Mammary epithelial cell (primary cell): ENCODE measurements at regions of chr1 and their contacts with region 1.

Region 1: DNA sequence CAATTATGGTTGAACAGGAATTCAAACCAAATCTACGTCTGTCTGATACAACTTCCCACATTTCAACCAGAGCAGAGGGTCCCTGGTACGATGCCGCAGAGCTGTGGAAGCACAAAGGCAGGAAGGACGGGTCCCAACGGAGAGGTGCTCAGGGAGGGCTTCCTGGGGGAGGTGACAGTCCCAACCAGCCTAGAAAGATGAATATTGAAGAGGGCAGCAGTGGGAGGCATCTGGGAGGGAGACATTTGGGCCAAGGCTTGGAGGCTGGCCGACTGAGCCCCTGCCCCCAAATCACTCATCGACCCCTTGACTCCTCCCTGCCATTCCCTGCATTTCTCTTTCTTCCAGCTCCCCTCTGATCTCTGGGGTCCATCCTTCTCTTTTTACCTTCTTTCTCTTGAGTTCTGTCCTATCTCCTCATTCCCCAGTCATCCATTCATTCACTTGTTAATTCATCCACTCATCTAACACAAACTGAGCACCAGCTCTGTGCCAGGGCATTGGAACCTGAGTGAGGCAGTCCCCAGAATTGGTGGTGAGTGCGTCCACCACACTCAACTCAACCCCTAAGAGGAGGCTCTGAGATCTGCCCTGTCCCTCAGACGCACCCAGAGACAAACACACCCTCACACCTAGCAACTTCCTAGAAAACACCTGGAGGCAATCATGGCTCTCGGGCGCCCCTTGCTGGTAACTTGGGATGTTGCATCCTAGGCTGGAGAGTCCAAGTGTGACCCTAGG is 13.2 kb upstream of the CELA3B start:
- DNase-seq: peak; percentile 71
- H3K4me3 ChIP-seq: no peak overlapping the region
- H3K27ac ChIP-seq: no peak overlapping the region
- H3K4me1 ChIP-seq: peaks cover 3% of the 10 kb centered on the region
- H3K27me3 ChIP-seq: no peaks in the 10 kb centered on the region
- CTCF ChIP-seq: peak; percentile 94

Region 2: DNA sequence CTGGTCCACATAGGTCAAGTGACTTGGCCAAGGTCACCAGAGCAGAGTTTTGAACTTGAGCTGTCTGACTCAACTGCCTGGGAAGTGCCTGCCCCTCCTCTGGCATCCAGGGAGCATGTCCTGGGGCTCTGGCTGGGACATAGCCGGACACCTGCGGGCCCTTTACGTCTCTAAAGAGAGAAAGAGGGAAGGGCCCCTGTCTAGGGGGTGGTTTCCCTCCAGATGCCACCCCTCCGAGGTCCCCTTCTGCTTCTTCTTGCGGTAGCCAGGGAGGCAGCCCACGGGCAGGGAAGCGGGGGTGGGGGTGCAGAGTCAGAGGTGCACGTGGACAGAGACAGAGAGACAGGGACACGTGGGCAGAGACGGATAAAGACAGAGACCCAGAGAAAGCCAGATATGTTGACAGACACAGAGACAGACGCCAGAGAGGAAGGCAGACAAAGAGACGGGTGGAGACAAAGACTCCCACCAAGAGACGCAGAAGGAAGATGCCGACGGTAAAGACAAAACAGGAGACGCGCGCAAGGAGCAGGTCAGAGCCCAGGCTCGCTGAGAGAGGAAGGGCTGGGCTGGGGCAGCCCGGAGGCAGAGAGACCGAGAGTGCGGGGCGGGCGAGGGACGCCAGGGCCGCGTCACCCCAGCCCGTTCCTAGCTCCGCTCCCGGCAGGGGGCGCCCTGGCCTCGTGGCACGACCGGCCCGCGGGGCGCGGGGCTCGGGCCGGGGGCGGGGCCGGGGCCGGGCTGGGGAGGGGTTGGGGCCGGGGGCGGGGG is 454.9 kb before region 1 on chr1:
- CTCF ChIA-PET with region 1: no interaction called
- dilution Hi-C with region 1: no loop called
- in situ Hi-C with region 1: no loop called
- intact Hi-C with region 1: loop called (anchors 10 kb)
- DNase-seq: peak; percentile 21
- H3K4me3 ChIP-seq: peak overlapping the region in 2 of 3 experiments; percentile 18 to 21
- H3K27ac ChIP-seq: no peak overlapping the region
- H3K4me1 ChIP-seq: peaks cover 14% of the 10 kb centered on the region
- H3K27me3 ChIP-seq: peaks cover 13% of the 10 kb centered on the region
- CTCF ChIP-seq: peak; percentile 25 to 56

Region 3: GRCh38 chr1:21734526-21734925 is 229.1 kb before region 1 on chr1:
- CTCF ChIA-PET with region 1: no interaction called
- dilution Hi-C with region 1: no loop called
- in situ Hi-C with region 1: no loop called
- intact Hi-C with region 1: no loop called
- DNase-seq: peak; percentile 51
- H3K4me3 ChIP-seq: no peak overlapping the region
- H3K27ac ChIP-seq: no peak overlapping the region
- H3K4me1 ChIP-seq: no peaks in the 10 kb centered on the region
- H3K27me3 ChIP-seq: no peaks in the 10 kb centered on the region
- CTCF ChIP-seq: no peak

Region 4: GRCh38 chr1:21852282-21853128 is 111.1 kb before region 1 on chr1:
- CTCF ChIA-PET with region 1: no interaction called
- dilution Hi-C with region 1: loop called (anchors 10 kb)
- in situ Hi-C with region 1: loop called in 1 of 2 experiments (anchors 25 kb)
- intact Hi-C with region 1: no loop called
- DNase-seq: no peak
- H3K4me3 ChIP-seq: no peak overlapping the region
- H3K27ac ChIP-seq: no peak overlapping the region
- H3K4me1 ChIP-seq: peaks cover 23% of the 10 kb centered on the region
- H3K27me3 ChIP-seq: no peaks in the 10 kb centered on the region
- CTCF ChIP-seq: no peak

Region 5: DNA sequence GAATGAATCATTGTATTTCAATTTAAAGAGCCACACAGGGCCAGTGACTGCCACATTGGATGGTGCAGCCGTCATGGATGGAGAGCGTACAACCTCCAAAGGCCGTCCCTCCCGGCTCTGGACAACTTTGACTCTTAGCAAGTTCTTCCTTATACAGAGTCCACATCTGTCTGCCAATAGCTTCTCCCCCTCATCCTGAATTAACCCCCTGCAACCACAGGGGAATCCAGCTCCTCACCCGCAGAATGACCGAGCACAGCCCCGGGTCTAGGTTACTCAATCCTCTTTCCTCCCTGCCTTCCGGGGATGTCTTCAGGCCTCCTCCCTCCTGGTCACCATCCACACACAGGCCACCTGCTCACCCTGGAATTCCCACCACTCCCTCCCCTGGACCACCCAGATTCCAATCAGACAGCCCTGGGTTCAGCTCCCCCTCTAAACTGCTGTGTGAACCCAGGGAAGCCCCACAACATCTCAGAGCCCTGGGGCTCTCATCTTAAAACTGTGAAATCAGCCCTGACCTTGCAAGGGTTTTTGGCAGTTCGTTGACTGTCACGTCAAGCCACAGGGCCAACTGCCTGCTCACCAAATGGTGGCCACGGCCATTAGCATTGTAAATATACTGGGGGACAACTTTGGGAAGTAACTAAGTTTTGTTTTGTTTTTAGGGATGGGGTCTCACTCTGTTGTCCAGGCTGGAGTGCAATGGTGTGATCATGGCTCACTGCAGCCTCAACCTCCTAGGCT is 80.8 kb before region 1 on chr1:
- CTCF ChIA-PET with region 1: no interaction called
- dilution Hi-C with region 1: no loop called
- in situ Hi-C with region 1: loop called in 1 of 2 experiments (anchors 5 kb)
- intact Hi-C with region 1: no loop called
- DNase-seq: no peak
- H3K4me3 ChIP-seq: no peak overlapping the region
- H3K27ac ChIP-seq: no peak overlapping the region
- H3K4me1 ChIP-seq: no peaks in the 10 kb centered on the region
- H3K27me3 ChIP-seq: no peaks in the 10 kb centered on the region
- CTCF ChIP-seq: no peak

Region 6: GRCh38 chr1:22025368-22026155 is 61.9 kb after region 1 on chr1:
- CTCF ChIA-PET with region 1: no interaction called
- dilution Hi-C with region 1: no loop called
- in situ Hi-C with region 1: no loop called
- intact Hi-C with region 1: loop called (anchors 2 kb)
- DNase-seq: peak; percentile 89
- H3K4me3 ChIP-seq: peak overlapping the region; percentile 76 to 89 (median 77)
- H3K27ac ChIP-seq: peak overlapping the region; percentile 94
- H3K4me1 ChIP-seq: peaks cover 11% of the 10 kb centered on the region
- H3K27me3 ChIP-seq: no peaks in the 10 kb centered on the region
- CTCF ChIP-seq: no peak